Activated CD8-positive, alpha-beta T cell treated with anti-CD3 and anti-CD28 coated beads for 36 hours (primary cell): ENCODE measurements at regions of chr7 and their contacts with region 1.

Region 1: GRCh38 chr7:25191640-25192039 is 36.6 kb downstream of the NPVF start:
- DNase-seq: no peak
- ATAC-seq: no peak
- H3K4me3 Mint-ChIP-seq: no peak overlapping the region
- H3K27ac Mint-ChIP-seq: no peak overlapping the region
- H3K4me1 Mint-ChIP-seq: no peaks in the 10 kb centered on the region
- H3K27me3 Mint-ChIP-seq: no peaks in the 10 kb centered on the region
- CTCF ChIP-seq: no peak

Region 2: DNA sequence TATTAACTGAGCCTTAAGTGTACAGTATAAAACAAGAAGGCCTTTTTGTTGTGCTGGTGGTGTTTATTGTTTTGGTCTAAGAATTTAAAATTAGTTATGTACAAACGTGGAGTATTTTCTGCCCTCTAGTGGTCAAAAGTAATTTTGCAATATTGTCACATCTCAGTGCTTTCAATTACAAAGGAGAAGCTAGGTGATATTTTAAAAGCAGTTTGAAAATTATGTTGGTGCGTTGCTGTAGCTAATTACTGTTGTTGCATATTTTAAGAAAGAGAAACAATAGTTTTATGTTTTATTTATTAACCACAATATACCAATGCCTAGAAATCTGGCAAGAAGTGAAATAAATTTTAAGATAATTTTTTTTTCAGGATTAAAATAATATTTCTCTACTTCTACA is 25.2 kb after region 1 on chr7:
- CTCF ChIA-PET with region 1: interaction called, 19 read pairs
- POLR2A ChIA-PET with region 1: no interaction called
- intact Hi-C with region 1: no loop called
- DNase-seq: no peak
- ATAC-seq: no peak
- H3K4me3 Mint-ChIP-seq: no peak overlapping the region
- H3K27ac Mint-ChIP-seq: no peak overlapping the region
- H3K4me1 Mint-ChIP-seq: no peaks in the 10 kb centered on the region
- H3K27me3 Mint-ChIP-seq: peaks cover 21% of the 10 kb centered on the region
- CTCF ChIP-seq: peak; percentile 79